Activated B cell treated with CpG ODN at 0.5 μM for 24 hours (primary cell): ENCODE measurements at regions of chr14 and their contacts with region 1.

Region 1: DNA sequence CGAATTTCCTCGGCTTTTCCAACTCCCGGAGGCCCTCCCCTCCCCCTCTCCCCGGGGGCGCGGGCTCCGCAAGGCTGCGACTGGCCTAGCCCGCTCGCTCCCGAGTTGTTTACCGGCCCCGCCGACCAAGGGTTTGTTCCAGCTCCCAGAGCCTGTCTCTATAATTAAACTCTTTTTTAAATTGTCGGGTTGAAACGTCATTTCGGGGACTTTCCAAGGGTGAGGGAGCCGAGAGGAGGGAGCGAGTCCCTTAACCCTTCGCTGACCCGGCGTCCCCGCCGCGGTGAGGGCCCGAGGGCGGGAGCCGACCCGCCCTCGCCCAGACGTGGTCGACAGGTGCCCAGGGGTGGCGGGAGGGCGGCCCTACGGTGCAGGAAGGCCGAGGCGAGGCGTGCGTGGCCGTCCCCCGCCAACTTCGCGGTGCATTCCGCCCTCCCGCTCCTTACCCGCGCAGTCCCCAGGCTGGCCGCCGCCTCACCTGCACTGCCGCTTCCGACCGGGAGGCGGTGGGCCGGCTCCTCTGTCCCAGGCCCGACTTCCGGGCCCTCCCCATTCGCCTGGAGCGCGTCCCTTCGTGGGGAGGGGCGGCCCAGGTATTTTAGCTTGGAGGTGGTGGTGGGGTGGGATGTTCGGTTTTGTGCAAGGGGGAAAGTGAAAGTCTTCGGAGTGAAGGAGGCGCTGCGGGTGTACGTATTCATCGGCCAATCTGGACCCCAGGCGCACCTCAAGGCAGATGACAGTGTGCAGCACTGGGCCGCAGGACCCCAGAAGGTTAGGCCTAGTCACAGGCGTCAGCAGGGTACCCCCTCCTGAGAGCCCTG is 2.9 kb upstream of the ZFP36L1 start:
- DNase-seq: peak; percentile 83
- ATAC-seq: peak; percentile 41
- H3K4me3 Mint-ChIP-seq: peak overlapping the region; percentile 100
- H3K27ac Mint-ChIP-seq: peak overlapping the region; percentile 99
- H3K4me1 Mint-ChIP-seq: peaks cover 48% of the 10 kb centered on the region
- H3K27me3 Mint-ChIP-seq: no peaks in the 10 kb centered on the region
- CTCF ChIP-seq: no peak

Region 2: GRCh38 chr14:68210729-68211299 is 585.0 kb before region 1 on chr14:
- CTCF ChIA-PET with region 1: no interaction called
- POLR2A ChIA-PET with region 1: interaction called, 9 read pairs
- intact Hi-C with region 1: loop called (anchors 1 kb)
- DNase-seq: no peak
- ATAC-seq: peak; percentile 87
- H3K4me3 Mint-ChIP-seq: peak overlapping the region; percentile 64
- H3K27ac Mint-ChIP-seq: peak overlapping the region; percentile 84
- H3K4me1 Mint-ChIP-seq: peaks cover 54% of the 10 kb centered on the region
- H3K27me3 Mint-ChIP-seq: no peaks in the 10 kb centered on the region
- CTCF ChIP-seq: no peak

Region 3: DNA sequence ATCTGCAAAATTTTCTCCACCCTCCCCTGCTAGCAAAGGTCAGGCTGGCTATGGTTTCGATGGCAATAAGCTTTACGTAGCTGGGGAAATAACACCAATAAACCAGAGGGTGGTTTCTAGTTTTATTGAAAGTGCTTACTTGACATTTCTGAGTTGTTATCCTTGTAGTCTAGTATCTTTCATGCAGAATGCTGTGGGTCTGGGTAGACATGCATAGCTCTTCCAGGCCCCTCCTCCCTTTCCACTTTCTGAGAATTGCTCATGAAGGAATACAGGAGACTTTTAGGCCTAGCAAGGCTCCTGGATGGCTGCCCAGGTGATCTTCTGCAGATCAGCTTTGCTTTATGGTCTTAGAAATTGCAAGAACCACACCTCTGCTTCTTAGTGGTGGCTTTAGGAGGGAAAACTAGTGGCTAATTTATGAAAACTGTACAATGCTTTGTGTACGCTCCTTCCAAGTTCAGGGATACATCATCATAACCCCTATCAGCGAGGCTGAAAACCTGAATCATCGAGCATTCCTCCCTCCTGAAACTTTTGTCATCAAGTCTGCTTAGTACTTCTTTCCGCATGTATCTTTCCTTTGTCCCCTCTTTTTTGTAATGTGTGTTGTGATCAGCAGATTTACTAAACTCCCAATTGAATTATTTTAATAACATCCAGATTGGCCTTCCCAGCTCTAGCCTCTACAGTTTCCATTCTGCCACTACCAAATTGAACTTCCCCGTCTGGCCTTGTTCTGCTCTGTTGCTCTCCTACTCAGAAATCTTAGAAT is 503.2 kb before region 1 on chr14:
- CTCF ChIA-PET with region 1: interaction called, 4 read pairs
- POLR2A ChIA-PET with region 1: interaction called, 361 read pairs
- intact Hi-C with region 1: no loop called
- DNase-seq: no peak
- ATAC-seq: peak; percentile 35
- H3K4me3 Mint-ChIP-seq: peak overlapping the region; percentile 59
- H3K27ac Mint-ChIP-seq: peak overlapping the region; percentile 96
- H3K4me1 Mint-ChIP-seq: peaks cover 77% of the 10 kb centered on the region
- H3K27me3 Mint-ChIP-seq: no peaks in the 10 kb centered on the region
- CTCF ChIP-seq: no peak

Region 4: DNA sequence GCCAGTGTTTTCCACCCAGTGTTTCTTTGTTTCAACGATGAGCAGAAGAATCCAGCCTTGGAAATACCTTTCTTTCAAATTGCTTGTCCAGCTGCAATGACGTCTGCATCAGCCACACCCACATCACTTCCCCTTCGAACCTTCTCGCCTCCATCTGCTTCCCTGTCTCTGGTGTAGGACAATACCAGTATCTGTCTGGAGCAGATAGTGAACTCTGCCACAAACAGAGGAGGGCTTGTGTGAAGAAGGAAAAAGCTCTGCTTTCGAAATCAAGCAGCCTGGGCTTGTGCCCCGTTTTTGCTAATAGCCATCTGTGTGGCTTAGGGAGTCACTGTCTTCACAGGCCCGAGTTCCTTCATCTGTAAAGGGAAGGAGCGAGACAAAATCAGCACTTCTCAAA is 418.3 kb before region 1 on chr14:
- CTCF ChIA-PET with region 1: no interaction called
- POLR2A ChIA-PET with region 1: interaction called, 59 read pairs
- intact Hi-C with region 1: no loop called
- DNase-seq: no peak
- ATAC-seq: peak; percentile 43
- H3K4me3 Mint-ChIP-seq: peak overlapping the region; percentile 50
- H3K27ac Mint-ChIP-seq: peak overlapping the region; percentile 83
- H3K4me1 Mint-ChIP-seq: peaks cover 69% of the 10 kb centered on the region
- H3K27me3 Mint-ChIP-seq: no peaks in the 10 kb centered on the region
- CTCF ChIP-seq: no peak

Region 5: GRCh38 chr14:68487805-68488590 is 307.8 kb before region 1 on chr14:
- CTCF ChIA-PET with region 1: no interaction called
- POLR2A ChIA-PET with region 1: interaction called, 86 read pairs
- intact Hi-C with region 1: no loop called
- DNase-seq: no peak
- ATAC-seq: no peak
- H3K4me3 Mint-ChIP-seq: no peak overlapping the region
- H3K27ac Mint-ChIP-seq: no peak overlapping the region
- H3K4me1 Mint-ChIP-seq: peaks cover 45% of the 10 kb centered on the region
- H3K27me3 Mint-ChIP-seq: no peaks in the 10 kb centered on the region
- CTCF ChIP-seq: no peak

Region 6: GRCh38 chr14:68668531-68668930 is 127.3 kb before region 1 on chr14:
- CTCF ChIA-PET with region 1: no interaction called
- POLR2A ChIA-PET with region 1: interaction called, 13 read pairs
- intact Hi-C with region 1: no loop called
- DNase-seq: no peak
- ATAC-seq: no peak
- H3K4me3 Mint-ChIP-seq: no peak overlapping the region
- H3K27ac Mint-ChIP-seq: peak overlapping the region; percentile 35
- H3K4me1 Mint-ChIP-seq: peaks cover 71% of the 10 kb centered on the region
- H3K27me3 Mint-ChIP-seq: no peaks in the 10 kb centered on the region
- CTCF ChIP-seq: no peak

Region 7: DNA sequence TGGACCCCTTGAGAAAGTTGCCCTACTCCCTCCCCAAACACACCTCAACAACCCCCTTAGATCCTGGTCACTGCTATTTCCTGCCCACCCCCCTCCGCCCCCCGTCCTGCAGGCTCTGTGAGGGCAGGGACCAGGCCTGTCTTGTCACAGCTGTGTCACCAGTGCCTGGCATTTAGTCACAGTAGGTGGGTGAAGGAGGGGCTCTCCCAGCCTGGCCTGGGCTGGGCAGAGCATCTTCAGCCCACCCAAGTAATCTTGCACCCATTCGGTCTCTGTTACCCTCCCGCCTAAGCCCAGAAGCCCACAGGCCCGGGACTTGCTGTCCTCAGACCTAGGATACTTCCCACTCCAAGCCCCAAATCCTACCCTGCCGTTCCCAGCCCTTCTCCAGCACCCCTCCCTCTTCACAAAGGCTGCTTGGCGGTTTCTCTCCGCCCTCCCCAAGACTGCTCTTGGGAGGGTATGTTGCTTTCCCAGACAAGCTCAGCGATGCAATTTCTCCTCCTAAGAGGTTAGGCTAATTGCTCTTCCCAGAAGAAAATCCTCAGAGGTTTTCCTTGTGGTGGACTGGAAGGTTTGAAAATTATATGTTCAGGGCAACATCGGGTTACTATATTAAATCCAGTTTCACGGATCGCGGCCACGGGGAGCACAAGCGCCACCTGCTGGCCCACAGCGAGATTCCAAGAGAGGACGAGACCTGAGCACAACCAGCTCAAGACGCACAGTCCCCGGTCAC is 47.8 kb after region 1 on chr14:
- CTCF ChIA-PET with region 1: interaction called, 4 read pairs
- POLR2A ChIA-PET with region 1: interaction called, 11 read pairs
- intact Hi-C with region 1: loop called (anchors 1 kb)
- DNase-seq: peak; percentile 66
- ATAC-seq: peak; percentile 93
- H3K4me3 Mint-ChIP-seq: peak overlapping the region; percentile 65
- H3K27ac Mint-ChIP-seq: peak overlapping the region; percentile 4
- H3K4me1 Mint-ChIP-seq: peaks cover 15% of the 10 kb centered on the region
- H3K27me3 Mint-ChIP-seq: peaks cover 4% of the 10 kb centered on the region
- CTCF ChIP-seq: peak; percentile 93